AG04450 (cell line): ENCODE measurements at regions of chr4 and their contacts with region 1.

Region 1: DNA sequence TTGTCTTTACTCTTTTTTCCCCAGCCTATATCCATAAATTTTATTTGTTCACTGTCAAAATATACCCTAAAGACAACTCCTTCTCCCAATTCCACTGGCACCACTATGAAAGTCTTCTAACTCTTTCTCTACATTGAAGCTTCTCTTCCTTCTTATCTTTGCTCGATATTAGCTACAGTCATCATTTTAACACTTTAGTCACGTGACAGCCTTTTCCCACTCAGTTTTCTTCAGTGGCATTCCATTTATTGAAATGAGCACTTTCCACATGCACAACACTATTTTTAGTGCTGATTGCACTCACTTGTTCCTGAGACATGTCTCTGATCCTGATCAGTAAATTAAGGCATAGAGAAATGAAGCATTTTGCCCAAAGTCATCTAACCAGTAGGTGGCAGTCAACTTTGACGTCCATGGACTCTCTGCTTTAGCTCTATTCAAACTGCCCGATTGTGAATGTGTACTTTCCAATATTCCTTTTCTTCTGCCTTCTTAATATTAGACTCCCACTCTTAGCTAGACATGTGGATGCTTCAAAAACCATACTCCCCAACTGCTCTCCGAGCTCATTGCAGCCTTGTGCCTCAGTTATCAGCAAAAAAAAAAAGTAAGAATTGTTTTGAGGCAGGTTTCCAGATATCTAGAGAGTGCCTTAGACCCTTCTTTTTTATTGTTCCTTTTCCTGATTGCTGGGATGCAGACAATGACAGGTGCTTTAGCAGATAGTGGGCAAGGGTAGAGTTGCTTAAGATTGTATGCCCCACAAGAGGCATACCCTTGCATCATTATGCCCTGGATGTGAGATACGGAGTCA is 394.4 kb upstream of the ADGRL3 start:
- DNase-seq: no peak
- H3K4me3 ChIP-seq: no peak overlapping the region
- H3K27ac ChIP-seq: no peak overlapping the region
- H3K27me3 ChIP-seq: no peaks in the 10 kb centered on the region
- CTCF ChIP-seq: peak; percentile 66

Region 2: DNA sequence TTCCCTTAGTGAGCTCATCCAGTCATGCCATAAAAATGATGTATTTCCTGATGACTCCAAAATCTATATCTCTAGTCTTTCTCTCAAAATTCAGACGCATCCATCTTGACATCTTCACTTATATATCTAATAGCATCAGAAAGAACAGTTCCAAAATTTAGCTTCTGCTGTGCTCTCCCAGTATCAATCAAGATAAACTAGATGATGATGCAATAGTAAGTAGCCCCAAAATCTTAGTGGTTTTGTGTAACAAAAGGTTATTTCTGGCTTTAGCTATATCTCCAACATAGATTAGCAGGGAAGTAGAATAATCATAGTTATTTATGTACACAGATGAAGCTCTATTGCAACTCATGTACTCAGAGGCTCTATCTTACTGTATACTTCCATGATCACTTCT is 11.9 kb after region 1 on chr4:
- CTCF ChIA-PET with region 1: interaction called, 16 read pairs
- POLR2A ChIA-PET with region 1: no interaction called
- DNase-seq: no peak
- H3K4me3 ChIP-seq: no peak overlapping the region
- H3K27ac ChIP-seq: no peak overlapping the region
- H3K27me3 ChIP-seq: no peaks in the 10 kb centered on the region
- CTCF ChIP-seq: no peak

Region 3: GRCh38 chr4:60840020-60840419 is 34.3 kb after region 1 on chr4:
- CTCF ChIA-PET with region 1: interaction called, 12 read pairs
- POLR2A ChIA-PET with region 1: no interaction called
- DNase-seq: no peak
- H3K4me3 ChIP-seq: no peak overlapping the region
- H3K27ac ChIP-seq: no peak overlapping the region
- H3K27me3 ChIP-seq: no peaks in the 10 kb centered on the region
- CTCF ChIP-seq: no peak